IMR-90 (cell line): ENCODE measurements at regions of chr1 and their contacts with region 1.

Region 1: DNA sequence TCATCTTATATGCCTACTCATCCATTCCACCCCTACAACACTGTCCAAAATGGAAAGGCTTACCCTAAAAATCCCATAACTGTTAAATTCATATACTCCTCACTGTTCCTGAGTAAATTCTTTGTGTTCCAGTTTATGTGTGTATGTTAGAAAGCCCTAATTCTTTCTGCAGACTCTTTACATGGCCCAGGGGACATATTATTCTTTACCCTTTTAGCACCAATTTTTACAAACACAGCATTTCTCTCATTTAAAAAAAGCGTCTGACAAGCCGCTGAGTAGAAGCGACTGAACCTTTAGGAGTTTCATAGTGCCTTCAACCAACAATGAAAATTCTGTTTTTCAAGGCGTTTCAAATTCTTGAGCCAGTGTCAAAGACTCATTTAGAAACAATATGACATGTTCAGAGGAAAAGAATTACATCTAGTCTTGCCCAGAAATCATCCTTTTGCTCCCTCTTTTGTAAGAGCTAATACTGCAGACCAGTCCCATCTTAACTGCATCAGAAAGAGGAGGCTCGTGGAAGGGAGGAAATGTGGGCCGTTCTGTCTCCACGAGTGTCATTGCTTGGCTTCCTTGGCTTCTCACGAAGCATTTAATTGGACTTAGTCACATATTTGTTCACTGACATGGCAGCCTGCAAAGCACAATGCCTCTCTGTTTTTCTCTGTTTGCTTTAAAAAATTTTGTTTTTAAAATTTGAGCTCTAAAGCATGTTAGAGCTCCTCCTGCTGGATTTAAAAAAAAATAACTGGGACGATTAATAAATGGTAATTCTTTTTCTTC is 21.3 kb upstream of the C1orf105 start:
- DNase-seq: peak; percentile 92
- ATAC-seq: peak; percentile 88
- H3K4me3 ChIP-seq: no peak overlapping the region
- H3K27ac ChIP-seq: peak overlapping the region; percentile 59; the same call in 1 of the 2 replicates
- H3K4me1 ChIP-seq: peaks cover 3% of the 10 kb centered on the region
- H3K27me3 ChIP-seq: no peaks in the 10 kb centered on the region
- CTCF ChIP-seq: peak; percentile 74
- POLR2A ChIP-seq: 0 out of 2 replicates have a peak, but pooled peaks have one; percentile 27
- RAD21 ChIP-seq: peak; percentile 82

Region 2: DNA sequence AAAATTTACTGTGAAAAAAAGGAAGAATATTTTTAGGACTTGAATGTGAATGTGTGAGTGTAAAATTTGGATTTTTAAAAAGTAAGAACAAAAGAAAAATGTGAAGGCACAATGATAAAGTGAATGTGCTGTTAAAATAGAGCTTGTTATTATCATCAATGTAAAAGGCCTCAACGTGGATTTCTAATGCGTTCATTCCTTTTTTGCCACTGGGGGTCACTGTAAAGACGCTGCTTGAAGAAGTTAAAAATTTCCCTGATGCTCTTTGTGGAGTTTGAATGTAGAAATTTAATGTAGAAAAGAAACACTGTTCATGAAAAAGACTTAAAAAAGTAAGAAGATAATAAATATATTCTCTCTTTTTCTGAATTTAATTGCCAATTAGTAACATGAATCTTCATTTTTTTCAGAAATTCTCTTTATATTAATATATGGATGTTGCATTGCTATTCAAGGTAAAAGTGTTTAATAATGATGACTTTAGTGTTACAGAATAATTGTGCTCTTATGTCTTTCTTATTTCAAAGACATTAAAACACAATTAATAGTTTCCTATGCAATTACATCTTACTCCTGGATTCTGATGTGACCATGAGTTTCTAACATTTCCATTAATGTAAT is 396.3 kb before region 1 on chr1:
- CTCF ChIA-PET with region 1: interaction called, 8 read pairs
- POLR2A ChIA-PET with region 1: no interaction called
- dilution Hi-C with region 1: no loop called
- in situ Hi-C with region 1: no loop called
- intact Hi-C with region 1: loop called (anchors 1 kb)
- DNase-seq: peak; percentile 73
- ATAC-seq: peak; percentile 69
- H3K4me3 ChIP-seq: no peak overlapping the region
- H3K27ac ChIP-seq: no peak overlapping the region
- H3K4me1 ChIP-seq: peaks cover 3% of the 10 kb centered on the region; the same call in 1 of the 2 replicates
- H3K27me3 ChIP-seq: no peaks in the 10 kb centered on the region
- CTCF ChIP-seq: peak; percentile 92
- POLR2A ChIP-seq: no peak
- RAD21 ChIP-seq: peak; percentile 94

Region 3: DNA sequence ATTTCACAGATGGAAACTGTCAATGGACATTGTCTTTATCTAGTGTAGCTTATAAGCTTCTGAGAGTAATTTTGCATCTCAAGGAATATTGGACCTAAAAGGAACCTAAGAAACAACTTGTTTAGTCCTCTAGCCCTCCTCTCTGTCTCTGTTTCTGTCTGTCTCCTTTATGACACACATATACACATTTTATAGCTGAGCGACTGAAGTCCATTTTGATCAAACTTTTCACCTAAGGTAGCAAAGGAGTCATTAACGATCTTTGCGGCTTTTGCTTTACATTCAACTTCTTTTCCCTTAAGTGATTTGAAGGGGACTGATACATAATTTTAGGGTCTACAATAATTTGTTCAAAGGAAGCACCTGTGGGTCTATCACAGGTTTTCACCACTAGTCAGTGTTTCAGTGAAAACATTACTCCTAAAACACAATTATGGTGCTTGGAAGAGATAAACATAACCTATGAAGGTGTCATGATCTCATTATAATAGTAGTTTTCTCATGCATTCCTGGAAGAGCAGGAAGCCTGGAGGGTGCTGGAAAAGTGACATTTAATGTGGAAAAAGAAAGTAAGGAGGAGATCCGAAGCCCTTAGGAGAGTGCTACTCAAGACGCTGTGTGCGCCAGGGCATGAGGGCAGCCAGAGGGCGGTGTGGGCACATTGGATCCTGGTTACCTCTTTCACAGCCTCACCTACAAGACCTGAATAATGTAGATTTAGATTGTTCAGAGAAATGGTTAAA is 309.2 kb before region 1 on chr1:
- CTCF ChIA-PET with region 1: interaction called, 5 read pairs
- POLR2A ChIA-PET with region 1: no interaction called
- dilution Hi-C with region 1: no loop called
- in situ Hi-C with region 1: no loop called
- intact Hi-C with region 1: loop called (anchors 1 kb)
- DNase-seq: peak; percentile 40
- ATAC-seq: no peak
- H3K4me3 ChIP-seq: no peak overlapping the region
- H3K27ac ChIP-seq: no peak overlapping the region
- H3K4me1 ChIP-seq: no peaks in the 10 kb centered on the region
- H3K27me3 ChIP-seq: no peaks in the 10 kb centered on the region
- CTCF ChIP-seq: peak; percentile 58
- POLR2A ChIP-seq: no peak
- RAD21 ChIP-seq: peak; percentile 74

Region 4: DNA sequence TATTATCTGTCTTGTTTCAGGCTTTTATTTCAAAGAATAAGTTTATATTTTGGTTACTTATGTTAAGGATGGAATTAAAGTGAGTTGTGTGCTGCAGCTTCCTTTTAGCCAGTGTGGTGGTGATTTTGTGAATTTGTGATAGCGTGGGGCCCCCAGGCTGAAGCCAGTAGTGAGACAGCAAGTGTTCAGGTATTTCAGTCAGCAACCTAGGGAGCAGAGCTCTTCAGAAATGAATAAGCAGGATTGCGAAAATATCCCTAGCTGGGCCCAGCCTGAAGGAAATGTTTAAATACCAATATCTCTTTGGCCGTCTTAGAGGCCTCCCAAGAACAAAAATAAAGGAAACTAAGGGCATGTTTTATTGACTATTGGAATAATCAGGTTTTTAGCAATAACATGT is 129.5 kb before region 1 on chr1:
- CTCF ChIA-PET with region 1: no interaction called
- POLR2A ChIA-PET with region 1: interaction called, 13 read pairs
- dilution Hi-C with region 1: no loop called
- in situ Hi-C with region 1: no loop called
- intact Hi-C with region 1: loop called (anchors 5 kb)
- DNase-seq: peak; percentile 66
- ATAC-seq: peak; percentile 74
- H3K4me3 ChIP-seq: no peak overlapping the region
- H3K27ac ChIP-seq: no peak overlapping the region
- H3K4me1 ChIP-seq: peaks cover 2% of the 10 kb centered on the region; the same call in 1 of the 2 replicates
- H3K27me3 ChIP-seq: no peaks in the 10 kb centered on the region
- CTCF ChIP-seq: no peak
- POLR2A ChIP-seq: no peak
- RAD21 ChIP-seq: no peak

Region 5: DNA sequence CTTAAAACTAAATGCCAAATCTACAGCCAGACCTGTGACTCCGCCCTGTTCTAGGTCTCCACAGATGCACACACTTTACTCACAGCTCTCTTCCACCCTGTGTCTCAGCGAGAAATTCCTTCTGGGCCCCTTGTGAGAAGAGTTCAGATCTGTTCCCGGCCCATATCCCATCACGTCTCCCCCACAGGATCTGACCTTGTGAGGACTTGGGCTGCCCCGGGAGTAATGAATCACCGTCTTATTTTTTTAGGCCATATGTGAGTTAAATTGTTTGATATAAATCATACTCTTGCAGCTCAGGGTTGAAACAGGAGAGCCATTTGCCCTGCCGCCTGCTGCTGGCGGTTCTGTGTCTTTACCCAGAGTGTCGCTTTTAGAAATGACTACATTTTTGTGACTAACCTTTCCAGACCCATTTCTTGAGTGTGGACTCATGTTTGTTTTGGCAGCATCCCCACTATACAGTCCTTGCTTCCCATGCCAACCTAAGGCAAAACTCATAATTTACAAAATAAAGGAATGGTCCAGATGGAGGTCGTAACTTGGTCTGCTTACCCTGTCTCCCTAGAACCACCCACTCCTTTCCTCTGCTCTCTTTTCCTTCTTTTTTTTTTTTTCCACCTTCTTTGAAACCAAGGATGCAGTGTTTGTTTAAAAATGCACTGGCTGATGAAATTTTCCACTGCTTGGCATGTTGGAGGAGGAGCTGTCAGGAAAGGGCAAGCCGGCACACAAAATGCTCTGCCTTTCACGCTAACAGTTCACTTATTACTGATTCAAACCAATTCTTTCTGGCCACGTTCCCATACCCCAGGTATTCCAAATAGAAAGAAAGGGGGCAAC is 76.7 kb before region 1 on chr1:
- CTCF ChIA-PET with region 1: no interaction called
- POLR2A ChIA-PET with region 1: no interaction called
- dilution Hi-C with region 1: no loop called
- in situ Hi-C with region 1: no loop called
- intact Hi-C with region 1: loop called (anchors 2 kb)
- DNase-seq: peak; percentile 88
- ATAC-seq: peak; percentile 79
- H3K4me3 ChIP-seq: no peak overlapping the region
- H3K27ac ChIP-seq: peak overlapping the region; percentile 75
- H3K4me1 ChIP-seq: peaks cover 21% of the 10 kb centered on the region
- H3K27me3 ChIP-seq: no peaks in the 10 kb centered on the region
- CTCF ChIP-seq: no peak
- POLR2A ChIP-seq: no peak
- RAD21 ChIP-seq: no peak; the same call in 1 of the 2 replicates

Region 6: DNA sequence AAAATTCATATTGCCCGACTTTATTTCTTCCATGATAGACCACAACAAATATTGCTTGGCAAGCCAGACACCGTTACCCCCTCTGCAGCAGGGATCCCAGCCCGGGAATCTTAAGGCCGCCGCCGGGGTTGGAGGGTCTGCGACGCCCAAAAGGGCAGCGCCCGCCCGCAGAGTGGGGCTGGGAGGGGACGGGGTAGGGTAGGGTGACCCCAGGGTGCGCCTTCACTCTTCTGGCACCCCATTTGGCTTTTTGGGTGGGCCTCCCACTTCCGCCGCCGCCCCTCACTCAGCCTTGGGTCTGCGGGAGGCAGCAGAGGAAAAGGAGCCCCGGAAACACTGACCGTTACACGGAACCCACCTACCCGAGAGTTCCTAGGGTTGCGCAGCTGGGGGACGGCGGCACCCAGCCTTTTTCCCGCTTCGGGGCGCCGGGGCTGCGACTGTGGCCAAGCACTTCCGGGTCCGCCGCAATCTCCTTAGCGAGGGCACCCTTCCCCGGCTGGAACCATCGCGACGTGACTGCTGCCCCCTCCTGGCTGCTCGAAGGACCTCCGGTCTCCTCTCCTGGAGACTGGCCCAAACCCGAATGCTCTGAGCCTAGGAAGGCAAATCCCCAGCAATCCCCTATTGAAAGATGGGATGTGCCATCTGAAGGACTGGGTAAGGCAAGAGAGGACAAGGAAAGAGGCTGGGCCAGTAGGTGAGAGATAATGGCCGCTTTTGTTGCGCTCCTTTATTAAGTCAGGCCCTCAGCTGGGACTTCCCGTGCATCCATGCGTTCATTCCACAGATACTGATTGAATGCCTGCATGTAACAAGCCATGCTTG is 44.7 kb after region 1 on chr1 and contains the start of gene PIGC:
- CTCF ChIA-PET with region 1: no interaction called
- POLR2A ChIA-PET with region 1: no interaction called
- dilution Hi-C with region 1: no loop called
- in situ Hi-C with region 1: no loop called
- intact Hi-C with region 1: loop called (anchors 1 kb)
- DNase-seq: peak; percentile 79
- ATAC-seq: peak; percentile 99
- H3K4me3 ChIP-seq: peak within 1 kb of the TSS; percentile 90
- H3K27ac ChIP-seq: peak within 1 kb of the TSS; percentile 84
- H3K4me1 ChIP-seq: peaks cover 4% of the 10 kb centered on the region
- H3K27me3 ChIP-seq: no peaks in the 10 kb centered on the region
- CTCF ChIP-seq: peak; percentile 87
- POLR2A ChIP-seq: no peak
- RAD21 ChIP-seq: peak; percentile 75
- total RNA-seq, gene PIGC: 14.9 and 19.4 TPM in 2 replicates